ENCODE measurements at regions of chr16 and their contacts with region 1.

Region 1: GRCh38 chr16:88383401-88384221 is 852 bp downstream of the ZNF469 start:
- DNase-seq: peak; percentile 63
- ATAC-seq: peak; percentile 40
- H3K4me3 ChIP-seq: peak overlapping the region; percentile 69
- H3K27ac ChIP-seq: peak overlapping the region; percentile 98
- H3K4me1 ChIP-seq: peaks cover 50% of the 10 kb centered on the region
- H3K27me3 ChIP-seq: no peaks in the 10 kb centered on the region
- CTCF ChIP-seq: peak; percentile 57
- POLR2A ChIP-seq: no peak; the same call in 1 of the 2 replicates
- RAD21 ChIP-seq: peak; percentile 63

Region 2: DNA sequence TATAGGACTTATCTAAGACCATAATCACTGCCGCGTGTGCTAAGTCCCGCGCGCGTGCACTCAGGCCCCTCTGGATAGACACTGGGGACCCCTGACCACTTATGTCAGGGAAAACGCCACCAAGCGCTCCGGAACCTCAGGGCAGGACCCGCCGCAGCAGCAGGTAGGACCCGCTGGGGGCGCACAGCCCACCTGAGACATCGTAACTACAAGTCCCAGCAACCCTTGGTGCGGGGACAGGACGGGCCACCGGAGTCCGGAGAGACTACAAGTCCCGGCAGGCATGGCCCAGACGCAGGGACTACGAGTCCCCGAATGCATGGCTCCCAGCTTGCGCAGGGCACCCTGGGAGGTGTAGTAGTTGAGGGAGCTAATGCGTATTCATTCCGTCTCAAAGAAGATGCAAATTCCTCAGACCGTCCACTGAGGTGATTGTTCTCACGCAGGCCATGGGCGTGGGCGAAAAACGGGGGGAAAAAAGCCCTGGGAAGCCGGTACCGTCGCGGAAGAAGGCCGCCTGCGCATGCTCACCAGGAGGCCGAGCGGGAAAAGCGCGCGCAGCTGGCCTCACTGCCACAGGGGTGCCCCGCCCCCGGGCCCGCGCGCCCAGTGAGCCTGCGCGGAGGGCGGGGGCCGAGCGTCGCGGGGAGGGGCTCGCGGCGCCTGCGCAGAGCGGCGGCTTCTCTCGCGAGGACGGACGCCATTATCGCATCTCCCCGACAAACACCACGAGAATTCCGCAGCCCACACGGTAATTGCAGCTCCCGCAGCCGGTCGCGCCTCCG is 432.7 kb before region 1 on chr16 and contains the start of gene BANP:
- CTCF ChIA-PET with region 1: no interaction called
- POLR2A ChIA-PET with region 1: no interaction called
- dilution Hi-C with region 1: no loop called
- in situ Hi-C with region 1: no loop called
- intact Hi-C with region 1: loop called (anchors 10 kb)
- DNase-seq: peak; percentile 98
- ATAC-seq: peak; percentile 94
- H3K4me3 ChIP-seq: peak within 1 kb of the TSS; percentile 74
- H3K27ac ChIP-seq: peak within 1 kb of the TSS; percentile 94
- H3K4me1 ChIP-seq: peaks cover 11% of the 10 kb centered on the region
- H3K27me3 ChIP-seq: no peaks in the 10 kb centered on the region
- CTCF ChIP-seq: peak; percentile 24; the same call in 1 of the 2 replicates
- POLR2A ChIP-seq: no peak
- RAD21 ChIP-seq: 0 out of 2 replicates have a peak, but pooled peaks have one; percentile 1
- total RNA-seq, gene BANP: 16.9 and 17.4 TPM in 2 replicates

Region 3: GRCh38 chr16:88022076-88023062 is 361.2 kb before region 1 on chr16:
- CTCF ChIA-PET with region 1: no interaction called
- POLR2A ChIA-PET with region 1: no interaction called
- dilution Hi-C with region 1: no loop called
- in situ Hi-C with region 1: no loop called
- intact Hi-C with region 1: loop called (anchors 10 kb)
- DNase-seq: no peak
- ATAC-seq: no peak
- H3K4me3 ChIP-seq: no peak overlapping the region
- H3K27ac ChIP-seq: no peak overlapping the region
- H3K4me1 ChIP-seq: peaks cover 8% of the 10 kb centered on the region
- H3K27me3 ChIP-seq: no peaks in the 10 kb centered on the region
- CTCF ChIP-seq: 0 out of 2 replicates have a peak, but pooled peaks have one; percentile 3
- POLR2A ChIP-seq: no peak
- RAD21 ChIP-seq: no peak

Region 4: DNA sequence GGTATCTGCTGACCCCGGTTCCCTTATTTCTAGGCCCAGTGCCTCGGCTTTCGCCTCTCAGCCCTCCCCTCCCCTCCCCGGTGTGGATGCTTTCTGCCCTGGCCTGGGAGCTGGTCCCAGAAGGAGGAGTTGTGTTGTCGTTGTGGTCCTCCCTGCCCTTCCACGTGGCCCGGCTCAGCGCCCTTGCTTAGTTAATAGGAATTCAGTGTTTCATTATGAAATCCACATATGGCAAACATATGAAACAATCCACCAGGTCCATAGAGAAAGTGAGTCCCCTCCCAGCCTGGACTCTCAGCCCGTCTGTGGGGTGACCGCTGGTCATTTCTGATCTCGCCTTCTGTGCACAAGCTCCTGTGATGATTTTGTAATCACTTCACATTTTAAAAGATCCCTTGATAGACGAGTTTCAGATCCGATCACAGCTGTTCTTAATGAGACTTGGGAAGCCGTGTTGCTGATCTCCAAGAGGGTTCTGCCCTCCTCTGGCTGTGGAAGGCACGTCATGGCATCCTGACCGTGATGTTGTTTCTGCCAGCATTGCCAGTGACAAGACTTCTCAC is 320.3 kb before region 1 on chr16:
- CTCF ChIA-PET with region 1: no interaction called
- POLR2A ChIA-PET with region 1: no interaction called
- dilution Hi-C with region 1: no loop called
- in situ Hi-C with region 1: no loop called
- intact Hi-C with region 1: loop called (anchors 2 kb)
- DNase-seq: peak; percentile 85
- ATAC-seq: peak; percentile 78
- H3K4me3 ChIP-seq: no peak overlapping the region
- H3K27ac ChIP-seq: peak overlapping the region; percentile 90
- H3K4me1 ChIP-seq: peaks cover 26% of the 10 kb centered on the region
- H3K27me3 ChIP-seq: no peaks in the 10 kb centered on the region
- CTCF ChIP-seq: peak; percentile 43
- POLR2A ChIP-seq: no peak
- RAD21 ChIP-seq: peak; percentile 54

Region 5: GRCh38 chr16:88194397-88195268 is 189.0 kb before region 1 on chr16:
- CTCF ChIA-PET with region 1: no interaction called
- POLR2A ChIA-PET with region 1: no interaction called
- dilution Hi-C with region 1: no loop called
- in situ Hi-C with region 1: loop called (anchors 5 kb)
- intact Hi-C with region 1: loop called (anchors 10 kb)
- DNase-seq: peak; percentile 52
- ATAC-seq: peak; percentile 16; the same call in 1 of the 2 replicates
- H3K4me3 ChIP-seq: no peak overlapping the region
- H3K27ac ChIP-seq: peak overlapping the region; percentile 63
- H3K4me1 ChIP-seq: peaks cover 8% of the 10 kb centered on the region
- H3K27me3 ChIP-seq: no peaks in the 10 kb centered on the region
- CTCF ChIP-seq: no peak
- POLR2A ChIP-seq: no peak
- RAD21 ChIP-seq: no peak

Region 6: GRCh38 chr16:88303890-88304819 is 79.5 kb before region 1 on chr16:
- CTCF ChIA-PET with region 1: no interaction called
- POLR2A ChIA-PET with region 1: no interaction called
- dilution Hi-C with region 1: no loop called
- in situ Hi-C with region 1: no loop called
- intact Hi-C with region 1: loop called (anchors 2 kb)
- DNase-seq: peak; percentile 98
- ATAC-seq: peak; percentile 77
- H3K4me3 ChIP-seq: no peak overlapping the region
- H3K27ac ChIP-seq: peak overlapping the region; percentile 95
- H3K4me1 ChIP-seq: peaks cover 58% of the 10 kb centered on the region
- H3K27me3 ChIP-seq: no peaks in the 10 kb centered on the region
- CTCF ChIP-seq: no peak
- POLR2A ChIP-seq: peak; percentile 76
- RAD21 ChIP-seq: peak; percentile 29

Region 7: GRCh38 chr16:88331989-88332920 is 51.4 kb before region 1 on chr16:
- CTCF ChIA-PET with region 1: interaction called, 3 read pairs
- POLR2A ChIA-PET with region 1: no interaction called
- dilution Hi-C with region 1: no loop called
- in situ Hi-C with region 1: no loop called
- intact Hi-C with region 1: loop called (anchors 2 kb)
- DNase-seq: peak; percentile 100
- ATAC-seq: peak; percentile 85
- H3K4me3 ChIP-seq: no peak overlapping the region
- H3K27ac ChIP-seq: peak overlapping the region; percentile 99
- H3K4me1 ChIP-seq: peaks cover 26% of the 10 kb centered on the region
- H3K27me3 ChIP-seq: no peaks in the 10 kb centered on the region
- CTCF ChIP-seq: no peak
- POLR2A ChIP-seq: peak; percentile 76
- RAD21 ChIP-seq: peak; percentile 45

Region 8: GRCh38 chr16:88844419-88845036 is 460.9 kb after region 1 on chr16:
- CTCF ChIA-PET with region 1: no interaction called
- POLR2A ChIA-PET with region 1: no interaction called
- dilution Hi-C with region 1: no loop called
- in situ Hi-C with region 1: no loop called
- intact Hi-C with region 1: no loop called
- DNase-seq: no peak
- ATAC-seq: no peak; the same call in 1 of the 2 replicates
- H3K4me3 ChIP-seq: no peak overlapping the region
- H3K27ac ChIP-seq: no peak overlapping the region
- H3K4me1 ChIP-seq: peaks cover 3% of the 10 kb centered on the region; the same call in 1 of the 2 replicates
- H3K27me3 ChIP-seq: no peaks in the 10 kb centered on the region
- CTCF ChIP-seq: no peak
- POLR2A ChIP-seq: no peak
- RAD21 ChIP-seq: no peak

Measured in IMR-90 (cell line).